ENCODE measurements at regions of chr12 and their contacts with region 1.

Region 1: DNA sequence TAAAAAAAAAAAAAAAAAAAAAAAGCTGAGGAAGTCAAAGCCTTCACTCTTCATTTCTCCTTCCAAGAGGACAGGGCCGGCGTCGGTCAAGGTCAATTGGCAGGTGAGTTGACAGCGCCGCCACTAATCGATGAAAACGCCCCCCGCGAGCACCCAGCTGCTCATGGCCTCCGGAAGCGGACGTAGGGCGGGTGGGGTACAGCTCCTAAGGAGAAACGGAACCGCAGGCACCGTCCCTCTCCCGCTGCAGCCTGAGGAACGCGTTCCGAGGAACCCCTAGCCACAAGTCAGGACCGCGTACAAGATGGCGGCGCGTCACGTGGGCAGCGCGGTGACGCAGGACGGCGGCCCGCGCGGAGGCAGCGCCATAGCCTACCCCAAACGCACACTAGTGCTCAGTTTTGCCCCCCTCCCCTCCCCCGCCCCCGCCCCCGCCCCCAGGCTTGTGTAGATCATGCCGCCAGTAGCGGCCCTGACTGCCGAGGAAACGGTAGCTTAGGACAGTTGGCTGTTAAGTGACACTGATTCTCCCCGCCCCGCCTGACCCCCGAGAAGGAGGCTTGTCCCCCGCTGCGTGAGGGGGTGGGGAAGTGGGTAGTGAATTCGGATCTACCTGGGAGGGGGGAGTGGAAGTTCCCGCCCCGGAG is at the start of gene ATF1:
- DNase-seq: peak; percentile 93
- H3K4me3 Mint-ChIP-seq: peak within 1 kb of the TSS; percentile 79
- H3K27ac Mint-ChIP-seq: peak within 1 kb of the TSS; percentile 91
- H3K4me1 Mint-ChIP-seq: peaks cover 32% of the 10 kb centered on the region
- H3K27me3 Mint-ChIP-seq: no peaks in the 10 kb centered on the region
- total RNA-seq, gene ATF1: 44.0 to 48.3 TPM

Region 2: GRCh38 chr12:50517456-50518048 is 246.2 kb before region 1 on chr12:
- CTCF ChIA-PET with region 1: no interaction called
- POLR2A ChIA-PET with region 1: no interaction called
- DNase-seq: no peak
- H3K4me3 Mint-ChIP-seq: no peak overlapping the region
- H3K27ac Mint-ChIP-seq: no peak overlapping the region
- H3K4me1 Mint-ChIP-seq: peaks cover 43% of the 10 kb centered on the region
- H3K27me3 Mint-ChIP-seq: no peaks in the 10 kb centered on the region

Region 3: DNA sequence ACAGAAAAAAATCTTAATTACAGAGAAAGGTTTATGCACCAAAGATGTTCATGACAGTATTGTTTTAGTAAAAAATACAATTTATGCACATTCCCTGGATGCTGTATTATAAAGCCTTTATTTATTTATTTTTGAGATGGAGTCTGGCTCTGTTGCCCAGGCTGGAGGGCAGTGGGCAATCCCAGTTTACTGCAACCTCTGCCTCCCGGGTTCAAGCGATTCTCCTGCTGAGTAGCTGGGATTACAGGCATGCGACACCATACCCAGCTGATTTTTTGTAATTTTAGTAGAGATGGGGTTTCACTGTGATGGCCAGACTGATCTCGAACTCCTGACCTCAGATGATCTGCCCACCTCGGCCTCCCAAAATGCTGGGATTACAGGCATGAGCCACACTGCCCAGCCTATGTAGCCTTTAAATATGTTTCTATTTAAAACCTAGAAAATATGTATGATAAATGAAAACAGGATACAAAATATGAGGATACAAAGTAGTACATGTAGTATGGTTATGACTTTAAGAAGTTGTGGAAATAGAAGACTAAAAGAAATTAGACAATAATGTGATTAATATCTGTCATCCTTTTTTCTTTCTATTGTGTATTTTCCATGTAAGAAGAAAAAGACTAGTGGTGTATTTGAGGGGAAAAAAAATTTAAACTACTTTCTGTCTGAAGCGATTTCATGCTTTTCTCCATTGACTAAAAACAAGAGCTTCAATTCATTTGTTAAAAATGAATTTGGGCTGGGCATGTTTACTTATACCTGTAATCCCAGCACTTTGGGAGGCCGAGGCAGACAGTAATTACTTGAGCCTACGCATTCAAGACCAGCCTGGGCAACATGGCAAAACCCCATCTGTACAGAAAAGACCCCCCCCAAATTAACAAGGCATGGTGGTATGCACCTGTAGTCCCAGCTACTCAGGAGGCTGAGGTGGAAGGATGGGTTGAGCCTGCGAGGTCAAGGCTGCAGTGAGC is 13.3 kb after region 1 on chr12:
- CTCF ChIA-PET with region 1: interaction called, 22 read pairs
- POLR2A ChIA-PET with region 1: interaction called, 17 read pairs
- DNase-seq: no peak
- H3K4me3 Mint-ChIP-seq: no peak overlapping the region
- H3K27ac Mint-ChIP-seq: no peak overlapping the region
- H3K4me1 Mint-ChIP-seq: peaks cover 18% of the 10 kb centered on the region
- H3K27me3 Mint-ChIP-seq: no peaks in the 10 kb centered on the region

Region 4: DNA sequence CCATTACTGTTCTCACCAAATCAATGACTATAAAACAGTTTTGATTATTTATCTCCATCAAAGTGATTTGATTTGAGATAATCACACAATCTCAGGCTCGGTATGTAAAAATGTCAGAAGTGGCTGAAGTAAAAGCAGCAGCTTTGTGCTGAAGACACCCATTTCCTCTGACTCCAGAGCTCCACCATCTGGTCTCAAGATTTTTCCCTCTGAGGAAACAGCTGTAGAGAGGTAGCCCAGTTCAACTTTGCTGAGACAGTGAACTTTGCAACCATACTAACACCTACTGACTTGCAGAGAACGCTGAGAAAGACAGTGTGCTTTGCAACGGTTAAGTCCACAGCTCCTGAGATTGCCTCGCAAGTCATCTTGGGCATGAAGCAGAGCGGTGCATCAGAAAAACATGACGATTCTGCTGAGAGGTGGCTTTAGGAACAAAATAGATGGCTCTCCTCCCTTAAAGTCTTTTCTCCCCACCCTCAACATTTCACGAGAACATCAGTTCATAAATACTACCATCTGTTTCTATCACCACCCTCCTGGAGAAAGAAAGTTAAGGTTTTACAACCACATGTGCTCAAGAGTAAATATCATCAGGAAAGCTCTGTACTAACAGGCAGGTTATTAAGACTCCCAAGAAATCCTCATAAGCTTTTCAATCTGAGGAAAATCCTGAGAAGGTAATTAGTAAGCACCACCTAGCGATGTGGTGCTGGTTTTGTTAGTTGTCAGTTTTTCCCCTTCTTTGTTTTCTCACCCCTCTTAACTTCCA is 223.4 kb after region 1 on chr12:
- CTCF ChIA-PET with region 1: interaction called, 14 read pairs
- POLR2A ChIA-PET with region 1: interaction called, 25 read pairs
- DNase-seq: peak; percentile 20
- H3K4me3 Mint-ChIP-seq: no peak overlapping the region
- H3K27ac Mint-ChIP-seq: no peak overlapping the region
- H3K4me1 Mint-ChIP-seq: peaks cover 21% of the 10 kb centered on the region
- H3K27me3 Mint-ChIP-seq: no peaks in the 10 kb centered on the region

Region 5: DNA sequence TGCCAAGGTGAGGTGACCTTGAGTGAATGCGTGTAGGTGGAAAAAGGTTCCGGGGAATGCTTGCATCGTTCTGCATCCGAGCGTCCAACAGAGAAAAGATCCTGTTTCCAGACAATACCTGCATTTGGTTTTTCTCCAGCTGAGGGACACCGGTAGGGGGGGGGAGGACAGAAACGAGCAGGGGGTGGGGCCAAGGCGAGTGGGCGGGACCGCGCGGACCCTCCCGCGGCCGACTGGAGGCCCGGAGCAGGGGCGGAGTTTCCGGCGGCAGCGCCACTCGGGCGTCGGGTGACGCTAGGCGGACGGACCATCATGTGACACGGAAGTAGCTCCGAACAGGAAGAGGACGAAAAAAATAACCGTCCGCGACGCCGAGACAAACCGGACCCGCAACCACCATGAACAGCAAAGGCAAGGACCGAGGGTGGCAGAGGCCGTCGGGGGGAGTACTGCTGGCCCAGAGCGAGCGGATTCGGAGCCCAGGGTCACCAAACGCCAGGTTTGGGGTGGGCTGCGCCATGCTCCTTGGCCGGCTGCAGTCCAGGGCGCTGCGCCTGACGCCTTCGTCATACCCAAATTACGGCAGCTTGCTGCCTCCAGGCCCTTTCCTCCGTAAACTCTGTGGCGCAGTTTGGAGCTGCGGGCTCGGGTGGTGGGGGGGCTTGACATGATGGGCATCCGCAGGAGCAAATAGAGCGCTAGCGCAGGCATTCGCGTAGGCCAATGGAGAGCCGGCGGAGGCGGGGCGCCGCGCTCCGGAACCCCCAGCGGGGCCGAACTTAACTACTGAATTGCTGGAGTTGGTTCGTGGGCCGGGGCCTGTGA is 475.0 kb after region 1 on chr12 and contains the start of gene DAZAP2:
- CTCF ChIA-PET with region 1: interaction called, 4 read pairs
- POLR2A ChIA-PET with region 1: interaction called, 11 read pairs
- DNase-seq: peak; percentile 97
- H3K4me3 Mint-ChIP-seq: peak within 1 kb of the TSS; percentile 93
- H3K27ac Mint-ChIP-seq: peak within 1 kb of the TSS; percentile 98
- H3K4me1 Mint-ChIP-seq: peaks cover 39% of the 10 kb centered on the region
- H3K27me3 Mint-ChIP-seq: peaks cover 4% of the 10 kb centered on the region
- total RNA-seq, gene DAZAP2: 247 TPM